ENCODE measurements at regions of chr1 and their contacts with region 1.

Region 1: GRCh38 chr1:89692601-89693521 is 59.9 kb downstream of the LRRC8C start:
- DNase-seq: no peak
- ATAC-seq: peak; percentile 60

Region 2: GRCh38 chr1:89632657-89633247 is 60.1 kb before region 1 on chr1 and contains the start of gene LRRC8C:
- intact Hi-C with region 1: loop called (anchors 10 kb)
- DNase-seq: peak; percentile 92
- ATAC-seq: peak; percentile 98
- total RNA-seq, gene LRRC8C: 5.9 TPM